ENCODE measurements at regions of chr1 and their contacts with region 1.

Region 1: DNA sequence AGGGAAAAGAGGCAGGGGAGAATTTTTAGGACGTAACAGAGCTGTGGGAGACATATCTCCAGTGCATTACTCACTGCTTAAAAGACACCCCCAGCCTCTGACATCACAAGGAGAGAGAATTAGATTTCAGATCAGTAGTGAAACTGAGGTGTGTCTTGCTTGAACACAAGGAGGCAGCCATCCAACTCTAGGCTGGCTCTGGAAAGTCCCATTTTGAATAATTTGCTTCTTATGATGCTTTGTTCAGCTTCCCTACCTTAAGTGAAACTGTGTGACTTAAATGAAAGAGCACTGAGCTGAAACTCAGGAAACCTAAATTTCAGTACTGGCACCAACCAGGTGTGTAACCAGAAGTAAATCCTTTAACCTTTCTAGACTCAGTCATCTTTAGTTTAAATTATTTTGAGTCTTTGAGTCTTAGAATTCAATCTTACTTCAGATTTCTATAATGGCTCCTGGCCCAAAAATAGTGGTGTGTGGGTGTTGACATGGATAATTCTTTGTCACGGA is 251.6 kb upstream of the SGIP1 start:
- DNase-seq: peak; percentile 82
- ATAC-seq: peak; percentile 80
- H3K4me3 Mint-ChIP-seq: peak overlapping the region; percentile 29
- H3K27ac Mint-ChIP-seq: peak overlapping the region; percentile 90
- H3K4me1 Mint-ChIP-seq: peaks cover 93% of the 10 kb centered on the region
- H3K27me3 Mint-ChIP-seq: no peaks in the 10 kb centered on the region

Region 2: GRCh38 chr1:65812065-65812464 is 470.3 kb before region 1 on chr1:
- CTCF ChIA-PET with region 1: no interaction called
- POLR2A ChIA-PET with region 1: interaction called, 3 read pairs
- intact Hi-C with region 1: loop called in 1 of 2 experiments (anchors 1 kb)
- DNase-seq: peak; percentile 81
- ATAC-seq: peak; percentile 98
- H3K4me3 Mint-ChIP-seq: peak overlapping the region; percentile 11
- H3K27ac Mint-ChIP-seq: peak overlapping the region; percentile 74
- H3K4me1 Mint-ChIP-seq: peaks cover 24% of the 10 kb centered on the region
- H3K27me3 Mint-ChIP-seq: peaks cover 36% of the 10 kb centered on the region

Region 3: GRCh38 chr1:66300972-66301451 is 18.6 kb after region 1 on chr1:
- CTCF ChIA-PET with region 1: interaction called, 4 read pairs
- POLR2A ChIA-PET with region 1: no interaction called
- intact Hi-C with region 1: loop called (anchors 1 kb)
- DNase-seq: peak; percentile 43
- ATAC-seq: peak; percentile 96
- H3K4me3 Mint-ChIP-seq: peak overlapping the region; percentile 26
- H3K27ac Mint-ChIP-seq: peak overlapping the region; percentile 60
- H3K4me1 Mint-ChIP-seq: peaks cover 48% of the 10 kb centered on the region
- H3K27me3 Mint-ChIP-seq: no peaks in the 10 kb centered on the region

Region 4: DNA sequence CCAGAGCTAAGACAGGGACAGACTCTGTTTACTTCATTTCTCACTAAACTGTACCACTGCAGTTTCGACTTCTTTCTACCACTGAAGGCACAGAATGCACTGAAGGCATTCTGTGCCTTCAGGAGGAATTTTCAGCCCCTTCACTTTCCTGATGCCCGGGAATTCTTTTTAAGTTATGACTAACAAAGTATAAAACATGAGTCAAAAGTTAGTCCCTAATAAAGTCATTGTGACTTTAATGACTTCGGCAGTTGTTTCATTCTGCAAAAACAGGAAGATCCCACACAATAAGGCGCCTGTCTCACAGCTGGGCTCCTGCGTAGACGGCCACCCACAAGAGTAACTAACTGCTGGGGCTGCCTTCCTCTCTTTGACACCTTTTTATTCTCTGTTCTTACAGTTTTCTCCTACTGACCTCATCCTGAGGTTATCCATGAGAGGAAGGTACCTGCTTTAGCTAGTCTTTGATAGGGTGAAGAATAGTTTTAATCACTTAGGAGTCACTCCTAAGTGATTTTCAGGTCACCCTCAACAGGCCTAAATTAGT is 67.7 kb after region 1 on chr1:
- CTCF ChIA-PET with region 1: interaction called, 30 read pairs
- POLR2A ChIA-PET with region 1: interaction called, 18 read pairs
- intact Hi-C with region 1: loop called (anchors 1 kb)
- DNase-seq: peak; percentile 78
- ATAC-seq: peak; percentile 59
- H3K4me3 Mint-ChIP-seq: peak overlapping the region; percentile 57
- H3K27ac Mint-ChIP-seq: peak overlapping the region; percentile 88
- H3K4me1 Mint-ChIP-seq: peaks cover 93% of the 10 kb centered on the region
- H3K27me3 Mint-ChIP-seq: no peaks in the 10 kb centered on the region

Region 5: GRCh38 chr1:67162957-67163356 is 880.6 kb after region 1 on chr1:
- CTCF ChIA-PET with region 1: no interaction called
- POLR2A ChIA-PET with region 1: no interaction called
- intact Hi-C with region 1: loop called in 1 of 2 experiments (anchors 2 kb)
- DNase-seq: peak; percentile 71
- ATAC-seq: peak; percentile 73
- H3K4me3 Mint-ChIP-seq: peak overlapping the region; percentile 59
- H3K27ac Mint-ChIP-seq: peak overlapping the region; percentile 90
- H3K4me1 Mint-ChIP-seq: peaks cover 66% of the 10 kb centered on the region
- H3K27me3 Mint-ChIP-seq: peaks cover 1% of the 10 kb centered on the region

Region 6: DNA sequence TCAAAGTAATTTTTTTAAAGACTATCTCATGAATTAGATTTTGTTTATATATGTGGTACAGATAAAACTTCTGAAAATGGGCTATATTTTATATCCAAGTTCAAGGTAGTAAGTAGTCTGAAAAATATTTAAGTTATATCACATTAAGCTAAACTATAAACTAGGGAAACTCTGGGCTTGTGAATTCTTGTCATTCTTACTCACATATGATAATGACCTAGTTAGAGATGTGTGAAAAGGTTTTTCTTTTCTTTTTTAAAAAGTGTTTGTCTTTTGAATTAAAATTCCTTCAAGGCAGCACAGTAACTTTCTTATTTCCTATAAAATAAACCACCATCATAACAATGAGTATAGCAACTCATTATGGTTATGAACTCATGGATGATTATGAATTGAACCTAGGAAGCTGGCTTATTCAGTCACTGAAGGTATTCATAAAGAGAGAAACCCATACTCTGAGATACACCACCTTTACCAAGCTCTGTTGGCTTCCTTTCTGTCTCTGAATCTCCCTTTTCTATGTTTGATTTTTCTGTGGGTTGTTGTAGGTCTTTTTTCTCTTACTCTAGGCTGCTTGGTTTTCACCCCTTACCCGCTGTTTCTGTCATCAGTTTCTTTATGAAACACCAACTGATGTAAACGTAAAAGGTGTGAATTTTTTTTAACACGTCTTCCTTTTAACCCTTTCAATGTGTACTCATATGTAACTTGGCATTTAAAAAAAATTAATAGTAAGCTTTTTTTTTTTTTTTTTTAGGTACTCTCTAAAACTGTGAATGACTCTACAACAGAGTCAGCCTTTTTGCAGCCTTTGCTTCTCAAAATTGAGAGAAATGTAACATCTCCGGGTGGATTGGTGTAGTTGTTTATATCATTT is 1050.5 kb after region 1 on chr1:
- CTCF ChIA-PET with region 1: no interaction called
- POLR2A ChIA-PET with region 1: no interaction called
- intact Hi-C with region 1: loop called (anchors 1 to 10 kb)
- DNase-seq: peak; percentile 62
- ATAC-seq: peak; percentile 86
- H3K4me3 Mint-ChIP-seq: peak overlapping the region; percentile 44
- H3K27ac Mint-ChIP-seq: peak overlapping the region; percentile 87
- H3K4me1 Mint-ChIP-seq: peaks cover 79% of the 10 kb centered on the region
- H3K27me3 Mint-ChIP-seq: no peaks in the 10 kb centered on the region

Measured in activated CD4-positive, alpha-beta T cell treated with anti-CD3 and anti-CD28 coated beads for 36 hours (primary cell).